Motor neuron (in vitro differentiated cells): ENCODE measurements at regions of chr1 and their contacts with region 1.

Region 1: DNA sequence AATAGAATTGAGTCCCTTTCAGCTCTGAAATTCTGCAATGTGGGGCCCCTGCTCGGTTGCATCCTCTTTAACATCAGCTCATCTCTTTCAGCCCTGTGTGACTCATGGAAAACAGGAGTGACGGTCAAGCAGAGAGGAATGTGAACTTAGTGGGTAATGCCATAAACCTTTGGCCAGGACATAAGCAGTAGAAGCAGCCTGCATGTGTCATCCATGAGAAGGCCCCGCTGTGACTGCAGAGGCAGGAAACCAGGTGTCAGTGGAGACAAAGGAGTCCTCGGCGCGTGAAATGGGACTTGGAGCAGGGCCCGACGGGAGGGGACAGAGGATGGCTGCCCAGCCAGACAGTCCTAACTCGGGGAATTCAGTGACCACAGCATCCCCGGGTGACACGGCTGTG is 21.1 kb upstream of the EPHB2 start:
- ATAC-seq: peak in 7 of 8 experiments; percentile 36 to 85 (median 67)
- H3K4me3 ChIP-seq: no peak overlapping the region
- H3K27ac ChIP-seq: no peak overlapping the region
- H3K4me1 ChIP-seq: peaks cover 26 to 34% of the 10 kb centered on the region in 2 donors

Region 2: DNA sequence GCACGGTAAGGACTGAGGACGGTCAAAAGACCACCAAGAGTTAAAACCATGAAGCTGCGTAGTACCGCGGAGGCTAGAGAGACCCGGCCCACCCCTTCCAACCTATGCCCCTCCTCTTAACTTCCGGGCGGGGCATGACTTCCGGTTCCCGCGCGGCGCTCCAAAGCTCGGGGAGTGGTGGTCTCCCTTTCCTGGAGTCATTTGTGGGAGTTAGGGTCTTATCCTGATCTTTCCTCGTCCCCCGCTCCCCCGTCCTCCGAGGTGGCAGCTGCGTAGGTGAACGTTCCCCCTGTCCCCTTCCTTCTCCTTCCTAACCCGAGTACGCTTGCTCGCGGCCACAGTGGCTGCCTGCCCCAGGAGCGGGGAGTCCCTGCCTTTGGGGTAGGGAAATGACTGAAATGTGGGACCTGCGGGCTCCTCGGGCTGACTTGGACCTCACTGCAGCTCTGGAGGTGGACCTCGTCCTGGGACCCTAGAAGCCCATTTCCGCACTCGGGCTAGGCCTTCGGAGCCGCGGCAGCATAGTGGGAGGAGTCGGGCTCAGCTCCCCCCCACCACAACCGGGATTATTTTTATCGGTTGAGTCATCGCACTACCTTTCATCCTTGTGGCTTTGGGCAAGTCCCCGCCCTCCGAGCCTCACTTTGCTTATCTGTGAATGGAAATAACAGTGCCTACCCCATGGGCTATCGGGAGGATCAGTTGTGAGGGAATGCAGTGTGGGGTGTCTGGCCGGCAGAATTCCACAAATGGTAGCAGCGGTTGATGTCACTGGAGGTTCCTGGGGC is 663.9 kb before region 1 on chr1:
- in situ Hi-C with region 1: no loop called
- ATAC-seq: peak; percentile 73 to 91 (median 84)
- H3K4me3 ChIP-seq: peak overlapping the region; percentile 74 to 99 (median 97)
- H3K27ac ChIP-seq: peak overlapping the region; percentile 96
- H3K4me1 ChIP-seq: peaks cover 13 to 15% of the 10 kb centered on the region in 2 donors

Region 3: DNA sequence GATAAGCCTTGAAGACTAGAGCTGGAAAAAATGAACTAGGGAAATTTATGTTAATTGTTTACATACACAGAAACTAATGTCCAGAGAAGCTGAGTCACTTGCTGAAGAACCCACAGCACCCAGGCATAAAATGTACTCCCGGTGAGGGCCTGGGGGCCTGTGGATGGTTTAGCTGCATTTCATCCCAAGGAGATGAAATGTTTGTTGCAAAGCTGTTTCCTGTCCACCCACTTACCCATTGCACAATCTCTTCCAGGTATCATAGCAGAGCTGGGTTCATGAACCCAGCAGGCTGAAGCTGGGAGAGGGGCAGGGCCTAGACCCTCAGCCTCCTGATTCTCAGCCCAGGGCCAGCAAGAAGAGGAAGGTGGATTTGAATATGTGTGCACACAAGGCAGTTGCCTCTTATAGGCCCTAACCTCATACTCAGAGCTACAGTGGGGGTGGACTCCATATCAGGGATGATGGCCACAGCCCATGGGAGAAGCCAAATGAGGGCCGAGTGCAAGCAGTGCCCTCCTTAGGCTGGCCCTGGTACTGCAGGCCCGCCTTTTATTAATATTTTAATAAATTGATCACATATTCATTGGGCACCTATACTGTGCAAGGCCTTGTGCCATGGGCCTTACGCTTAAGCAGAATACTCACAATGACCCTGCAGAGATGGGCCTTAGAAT is 172.4 kb after region 1 on chr1:
- in situ Hi-C with region 1: loop called in 3 of 9 experiments (anchors 25 kb)
- ATAC-seq: peak; percentile 68 to 98 (median 94)
- H3K4me3 ChIP-seq: no peak overlapping the region
- H3K27ac ChIP-seq: peak overlapping the region; percentile 4 to 7
- H3K4me1 ChIP-seq: peaks cover 4 to 11% of the 10 kb centered on the region in 2 donors

Region 4: DNA sequence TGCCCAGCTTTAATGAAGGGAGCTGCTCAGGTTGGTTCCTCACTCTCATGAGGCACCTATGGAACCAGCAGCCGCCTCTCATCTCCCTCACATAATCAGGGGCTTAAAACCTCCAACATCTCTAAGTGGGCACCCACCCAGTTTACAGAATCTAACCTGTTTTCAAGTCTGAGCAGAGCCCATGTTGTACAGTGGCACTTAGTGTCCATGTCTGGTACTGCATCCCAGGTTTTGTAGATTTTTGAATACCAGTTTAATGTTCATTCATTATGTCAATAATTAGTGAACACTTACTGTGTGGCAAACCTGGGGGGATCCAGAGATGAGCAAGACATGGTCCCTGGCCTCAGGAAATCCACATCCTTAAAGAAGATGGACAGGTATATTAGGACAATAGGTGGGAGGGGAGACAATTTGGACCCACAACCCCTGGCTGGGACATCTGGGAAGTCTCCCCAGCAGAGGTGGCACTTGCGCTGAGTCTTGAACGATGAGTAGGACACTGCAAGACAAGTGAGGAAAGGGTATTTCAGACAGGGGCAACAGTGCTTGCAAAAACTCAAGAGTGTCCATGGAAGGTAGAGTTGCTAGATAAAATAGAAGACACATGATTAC is 199.8 kb after region 1 on chr1:
- in situ Hi-C with region 1: loop called in 3 of 9 experiments (anchors 25 kb)
- ATAC-seq: peak; percentile 31 to 72 (median 47)
- H3K4me3 ChIP-seq: no peak overlapping the region
- H3K27ac ChIP-seq: no peak overlapping the region
- H3K4me1 ChIP-seq: peaks cover 0 to 8% of the 10 kb centered on the region in 2 donors